A549 (cell line): ENCODE measurements at regions of chr6 and their contacts with region 1.

Region 1: DNA sequence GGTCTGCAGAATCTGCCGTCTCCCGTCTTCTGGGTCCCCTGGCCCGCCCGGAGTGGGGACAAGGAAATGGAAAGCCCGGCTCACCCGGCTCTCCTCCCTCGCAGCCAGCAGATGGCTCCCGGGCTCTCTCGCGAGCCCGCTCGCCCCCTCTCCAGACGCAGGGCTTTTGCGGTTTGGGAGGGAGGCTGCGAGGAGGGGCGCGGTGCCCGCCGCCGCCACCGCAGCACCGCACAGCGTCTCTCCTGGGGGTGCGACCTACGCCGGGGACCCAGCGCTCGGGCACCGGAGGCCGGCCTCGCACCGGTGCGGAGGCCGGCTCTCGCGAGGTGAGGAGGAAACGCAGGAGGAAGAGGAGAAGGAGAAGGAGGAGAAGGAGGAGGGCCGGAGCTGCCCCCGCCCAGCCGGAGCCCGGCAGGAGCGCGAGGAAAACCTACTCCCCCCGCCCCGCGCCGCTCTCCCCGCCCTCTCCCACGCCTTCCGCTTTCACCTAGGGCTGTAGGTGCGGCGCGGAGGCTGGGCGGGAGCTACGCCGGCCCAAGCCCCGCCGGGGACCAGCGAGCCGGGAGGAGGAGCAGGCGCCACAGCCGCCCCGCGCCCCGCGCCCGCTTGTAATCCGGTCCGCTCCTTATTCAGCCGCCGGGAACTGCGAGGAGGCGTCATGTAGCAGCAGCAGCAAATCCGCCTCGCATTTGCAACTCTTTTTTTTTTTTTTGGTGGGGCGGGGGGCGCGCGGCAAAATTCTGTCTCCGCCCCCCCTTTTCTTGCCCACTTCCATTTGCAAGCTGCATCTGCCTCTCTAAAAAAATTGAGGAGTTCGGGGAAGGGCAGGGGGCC is at the start of gene CARMIL1:
- DNase-seq: peak; percentile 79
- ATAC-seq: peak; percentile 91 to 93
- H3K4me3 ChIP-seq: peak within 1 kb of the TSS; percentile 99
- H3K27ac ChIP-seq: peak within 1 kb of the TSS; percentile 95 to 96
- H3K4me1 ChIP-seq: peaks cover 28% of the 10 kb centered on the region
- CTCF ChIP-seq: peak; percentile 76
- EP300 ChIP-seq: no peak
- POLR2A ChIP-seq: peak; percentile 33
- RAD21 ChIP-seq: peak; percentile 64 to 84
- polyA plus RNA-seq, gene CARMIL1: 11.8 and 16.1 TPM in 2 replicates

Region 2: DNA sequence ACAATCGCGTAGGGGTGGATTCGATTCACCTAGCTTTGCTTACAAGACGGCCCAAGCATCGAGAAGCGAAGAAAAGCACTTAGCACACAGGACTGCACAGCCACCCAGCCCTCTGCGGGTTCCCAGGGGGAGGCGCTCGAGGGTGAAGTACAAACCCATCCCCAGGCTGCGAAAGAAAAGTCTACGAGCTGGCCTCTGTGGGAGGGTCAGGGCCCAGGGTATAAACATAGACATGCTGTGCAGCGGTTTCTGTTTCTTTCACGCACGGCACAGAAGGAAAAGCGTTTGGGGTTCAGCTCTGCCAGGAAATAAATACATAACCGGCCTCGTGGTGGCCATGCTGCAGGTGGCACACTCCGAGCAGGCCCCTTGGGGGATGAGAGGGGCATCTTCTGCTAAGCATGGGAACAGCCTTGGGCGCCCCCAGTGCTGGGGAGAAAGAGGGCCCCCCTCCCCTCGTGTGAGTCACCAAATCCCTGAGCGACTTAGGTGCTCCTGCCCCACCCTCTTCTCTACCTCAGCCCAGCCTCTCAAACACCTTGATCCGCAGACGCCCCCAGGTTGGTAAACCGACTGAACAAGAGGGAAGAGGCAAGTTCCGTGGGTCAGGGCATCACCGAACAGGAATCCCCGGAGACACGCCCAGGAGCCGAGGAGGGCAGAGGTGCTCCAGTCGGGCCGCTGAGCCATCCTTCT is 251.8 kb before region 1 on chr6:
- CTCF ChIA-PET with region 1: no interaction called
- POLR2A ChIA-PET with region 1: no interaction called
- DNase-seq: no peak
- ATAC-seq: no peak
- H3K4me3 ChIP-seq: no peak overlapping the region
- H3K27ac ChIP-seq: no peak overlapping the region
- H3K4me1 ChIP-seq: 0 out of 3 replicates have a peak, but pooled peaks cover under 1% of the 10 kb centered on the region
- CTCF ChIP-seq: no peak
- EP300 ChIP-seq: no peak
- POLR2A ChIP-seq: no peak
- RAD21 ChIP-seq: no peak

Region 3: DNA sequence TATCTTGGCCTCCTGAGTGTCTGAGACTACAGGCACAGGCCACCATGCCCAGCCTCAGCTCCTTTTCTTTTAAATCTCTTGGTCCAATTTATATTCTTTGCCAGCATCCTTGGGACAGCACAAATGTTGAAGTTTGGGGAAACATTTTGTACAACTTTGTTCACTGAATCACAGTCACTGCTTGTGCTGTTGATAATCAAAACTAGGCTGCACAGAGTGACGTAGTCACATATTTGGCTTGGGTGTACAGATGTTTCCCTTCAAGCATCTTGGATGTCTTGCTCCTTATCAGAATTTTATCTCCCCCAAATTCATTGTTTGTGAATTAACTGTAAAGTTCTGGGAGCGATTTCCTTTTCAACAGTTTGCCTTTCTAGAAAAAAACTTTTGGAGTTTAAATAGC is 17.9 kb after region 1 on chr6:
- CTCF ChIA-PET with region 1: interaction called, 10 read pairs
- POLR2A ChIA-PET with region 1: interaction called, 3 read pairs
- DNase-seq: no peak
- ATAC-seq: no peak
- H3K4me3 ChIP-seq: no peak overlapping the region
- H3K27ac ChIP-seq: no peak overlapping the region
- H3K4me1 ChIP-seq: peaks cover 11% of the 10 kb centered on the region
- CTCF ChIP-seq: no peak
- EP300 ChIP-seq: no peak
- POLR2A ChIP-seq: no peak
- RAD21 ChIP-seq: no peak

Region 4: DNA sequence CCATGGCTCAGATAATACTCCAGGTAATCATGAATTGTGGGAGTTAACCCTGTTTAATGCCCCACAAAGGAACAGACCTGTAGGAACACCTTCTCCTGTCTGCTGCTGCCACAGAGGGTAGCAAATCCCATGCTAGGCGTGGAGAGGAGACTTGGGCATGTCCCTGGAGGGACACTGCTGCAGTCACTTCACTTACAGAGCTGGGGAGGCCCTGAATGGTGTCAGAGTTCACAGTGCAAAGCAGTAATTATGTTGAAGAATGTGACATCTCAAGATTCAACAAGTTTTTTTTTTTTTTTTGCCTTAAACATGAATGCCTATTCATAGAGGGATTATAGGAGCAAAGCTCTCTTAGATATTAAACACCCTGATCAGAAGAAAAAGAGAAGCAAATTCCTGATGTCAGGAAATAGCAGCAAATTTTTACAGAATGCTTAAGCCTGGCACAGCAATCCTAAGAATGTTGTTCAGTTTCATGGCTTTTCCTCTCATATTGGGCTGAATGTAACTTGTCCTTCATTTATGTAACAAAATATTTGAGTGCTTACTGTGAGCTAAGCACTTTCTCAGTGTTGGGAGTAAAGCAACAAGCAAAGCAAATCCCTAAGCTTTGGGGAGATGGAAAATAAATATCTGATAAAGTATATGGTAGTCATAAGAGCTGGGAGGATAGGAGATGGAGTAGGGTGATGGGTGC is 45.1 kb after region 1 on chr6:
- CTCF ChIA-PET with region 1: interaction called, 10 read pairs
- POLR2A ChIA-PET with region 1: interaction called, 9 read pairs
- DNase-seq: no peak
- ATAC-seq: no peak
- H3K4me3 ChIP-seq: no peak overlapping the region
- H3K27ac ChIP-seq: no peak overlapping the region
- H3K4me1 ChIP-seq: no peaks in the 10 kb centered on the region
- CTCF ChIP-seq: no peak
- EP300 ChIP-seq: no peak
- POLR2A ChIP-seq: no peak
- RAD21 ChIP-seq: no peak

Region 5: GRCh38 chr6:25497383-25498040 is 218.4 kb after region 1 on chr6:
- CTCF ChIA-PET with region 1: interaction called, 16 read pairs
- POLR2A ChIA-PET with region 1: no interaction called
- DNase-seq: no peak
- ATAC-seq: no peak
- H3K4me3 ChIP-seq: no peak overlapping the region
- H3K27ac ChIP-seq: no peak overlapping the region
- H3K4me1 ChIP-seq: no peaks in the 10 kb centered on the region
- CTCF ChIP-seq: no peak
- EP300 ChIP-seq: no peak
- POLR2A ChIP-seq: no peak
- RAD21 ChIP-seq: no peak

Region 6: GRCh38 chr6:26493258-26493657 is 1214.1 kb after region 1 on chr6:
- CTCF ChIA-PET with region 1: no interaction called
- POLR2A ChIA-PET with region 1: no interaction called
- DNase-seq: peak in 1 of 2 experiments; percentile 40
- ATAC-seq: peak; percentile 56 to 76; a peak in 4 of 6 replicates
- H3K4me3 ChIP-seq: no peak overlapping the region
- H3K27ac ChIP-seq: no peak overlapping the region
- H3K4me1 ChIP-seq: no peaks in the 10 kb centered on the region
- CTCF ChIP-seq: no peak
- EP300 ChIP-seq: no peak
- POLR2A ChIP-seq: no peak
- RAD21 ChIP-seq: no peak